Activated CD4-positive, alpha-beta memory T cell treated with anti-CD3 and anti-CD28 coated beads, Interleukin-2, amount 10 ng/mL, durations not matched to agents 7 days and 5 days (primary cell): ENCODE measurements at regions of chr14 and their contacts with region 1.

Region 1: GRCh38 chr14:56579345-56580220 is at the start of gene TMEM260:
- DNase-seq: peak; percentile 90
- H3K4me3 Mint-ChIP-seq: peak within 1 kb of the TSS; percentile 87
- H3K27ac Mint-ChIP-seq: peak within 1 kb of the TSS; percentile 89
- H3K4me1 Mint-ChIP-seq: peaks cover 33% of the 10 kb centered on the region
- H3K27me3 Mint-ChIP-seq: no peaks in the 10 kb centered on the region
- total RNA-seq, gene TMEM260: 15.1 to 19.4 TPM

Region 2: DNA sequence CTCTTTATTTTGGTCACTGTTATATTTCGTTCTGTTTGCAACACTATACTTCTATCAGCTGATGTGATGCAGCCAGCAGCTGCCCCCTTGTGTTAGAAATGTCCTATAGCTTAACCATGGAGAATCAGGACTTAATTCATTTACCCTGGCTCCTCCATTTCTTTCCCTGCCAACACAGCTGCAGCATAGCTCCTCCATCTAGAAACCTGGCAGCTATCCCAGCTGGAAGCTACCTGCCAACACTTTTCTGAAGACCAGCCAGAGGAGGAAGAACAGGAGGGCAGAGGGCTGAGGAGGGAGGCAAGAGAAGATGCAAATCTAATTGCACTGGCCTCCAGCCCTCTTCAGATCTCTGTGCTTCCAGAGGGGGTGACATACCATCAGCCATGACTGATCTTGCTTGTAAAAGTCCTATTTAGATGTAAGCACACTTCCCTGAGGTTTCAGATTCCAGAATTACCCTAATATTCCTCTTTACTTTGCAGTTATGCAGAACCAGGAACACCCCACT is 156.8 kb before region 1 on chr14:
- CTCF ChIA-PET with region 1: no interaction called
- POLR2A ChIA-PET with region 1: no interaction called
- DNase-seq: no peak
- H3K4me3 Mint-ChIP-seq: no peak overlapping the region
- H3K27ac Mint-ChIP-seq: no peak overlapping the region
- H3K4me1 Mint-ChIP-seq: no peaks in the 10 kb centered on the region
- H3K27me3 Mint-ChIP-seq: no peaks in the 10 kb centered on the region

Region 3: GRCh38 chr14:56590535-56590960 is 11.0 kb after region 1 on chr14:
- CTCF ChIA-PET with region 1: interaction called, 10 read pairs
- POLR2A ChIA-PET with region 1: interaction called, 12 read pairs
- DNase-seq: no peak
- H3K4me3 Mint-ChIP-seq: no peak overlapping the region
- H3K27ac Mint-ChIP-seq: no peak overlapping the region
- H3K4me1 Mint-ChIP-seq: no peaks in the 10 kb centered on the region
- H3K27me3 Mint-ChIP-seq: no peaks in the 10 kb centered on the region

Region 4: DNA sequence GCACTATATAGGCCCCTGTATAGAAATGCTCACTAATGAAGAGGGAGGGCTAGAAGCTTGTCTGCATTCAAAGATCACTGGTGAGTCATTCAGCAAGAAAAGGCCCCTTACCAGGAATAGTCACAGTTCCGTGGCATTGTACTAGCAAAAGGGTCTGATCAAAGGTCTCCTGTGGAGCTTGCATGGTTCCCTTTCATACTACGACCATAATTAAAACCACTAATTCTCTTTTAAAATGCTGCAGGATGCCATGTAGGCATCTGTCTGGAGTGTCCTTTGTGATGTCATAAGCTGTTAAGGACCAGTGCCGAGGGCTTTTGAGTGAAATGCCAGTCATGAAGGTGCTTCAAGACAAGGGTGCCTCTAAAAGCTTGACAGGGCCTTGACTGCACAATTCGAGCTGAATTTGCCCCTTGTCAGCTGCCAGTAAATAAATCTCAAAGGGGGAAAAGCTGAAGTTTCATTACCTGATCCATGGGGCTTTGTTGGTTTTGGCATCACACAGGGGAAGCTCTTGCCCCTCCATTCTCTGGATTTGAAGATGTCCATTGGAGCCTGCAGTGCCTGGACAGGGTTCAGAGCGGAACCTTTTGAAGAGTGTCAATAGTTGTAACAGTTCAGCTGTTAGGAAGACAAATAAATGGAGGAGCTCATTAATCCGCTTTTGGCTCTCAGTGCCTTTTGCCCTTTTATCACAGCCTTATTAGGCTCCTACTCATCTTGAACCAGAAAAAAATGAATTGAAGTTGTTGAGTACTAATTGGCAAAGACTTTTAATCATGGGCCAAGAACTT is 69.1 kb after region 1 on chr14:
- CTCF ChIA-PET with region 1: no interaction called
- POLR2A ChIA-PET with region 1: no interaction called
- DNase-seq: no peak
- H3K4me3 Mint-ChIP-seq: no peak overlapping the region
- H3K27ac Mint-ChIP-seq: no peak overlapping the region
- H3K4me1 Mint-ChIP-seq: no peaks in the 10 kb centered on the region
- H3K27me3 Mint-ChIP-seq: no peaks in the 10 kb centered on the region

Region 5: DNA sequence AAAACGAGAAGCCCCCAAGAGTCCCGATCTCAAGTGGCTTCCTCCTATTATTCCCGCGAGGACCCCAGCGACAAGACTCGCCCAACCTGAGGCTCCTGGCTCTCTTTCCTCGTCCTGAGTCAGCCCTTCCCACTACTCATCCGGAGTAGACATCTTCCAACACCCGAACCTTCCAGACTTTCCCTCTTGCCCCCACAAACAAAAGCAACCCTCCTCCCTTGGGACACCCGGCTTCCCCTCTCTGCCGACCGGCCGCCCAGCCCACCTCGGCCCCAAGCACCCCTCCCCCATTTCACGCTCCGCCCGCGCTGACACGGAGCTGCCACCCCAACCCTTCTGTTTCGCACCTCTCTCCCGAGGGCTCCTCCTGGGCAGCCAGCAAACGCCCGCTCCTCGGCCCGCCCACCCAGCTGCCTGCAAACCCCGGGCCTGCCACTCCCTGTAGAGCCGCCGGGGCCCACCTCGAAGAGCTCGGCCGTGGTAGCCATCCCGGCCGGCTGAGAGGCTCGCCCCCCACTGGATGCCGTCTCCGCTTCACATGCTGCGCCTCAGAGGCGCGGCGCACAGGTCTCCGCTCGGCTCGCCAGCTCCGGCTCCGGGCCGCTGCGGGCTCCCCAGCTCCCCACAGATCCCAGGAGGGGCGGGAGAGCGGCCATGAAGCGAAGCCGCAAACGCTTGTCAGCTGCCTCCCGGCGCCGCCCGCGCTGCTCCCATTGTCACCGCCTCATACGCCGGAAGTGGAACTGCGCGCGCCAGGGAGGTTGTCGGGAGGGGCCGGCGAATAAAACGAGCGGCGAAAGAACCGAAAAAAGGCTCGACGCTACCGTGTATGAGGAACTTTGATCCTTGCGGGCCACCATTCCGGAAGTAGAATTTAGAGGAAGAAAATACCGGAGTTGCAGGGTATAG is 688.8 kb after region 1 on chr14 and contains the starts of genes AP5M1 and EXOC5:
- CTCF ChIA-PET with region 1: no interaction called
- POLR2A ChIA-PET with region 1: interaction called, 14 read pairs
- DNase-seq: peak; percentile 94
- H3K4me3 Mint-ChIP-seq: peak within 1 kb of the TSS; percentile 97
- H3K27ac Mint-ChIP-seq: peak within 1 kb of the TSS; percentile 100
- H3K4me1 Mint-ChIP-seq: peaks cover 58% of the 10 kb centered on the region
- H3K27me3 Mint-ChIP-seq: no peaks in the 10 kb centered on the region
- total RNA-seq, gene AP5M1: 40.6 to 44.3 TPM
- total RNA-seq, gene EXOC5: 72.1 to 76.6 TPM